Activated CD4-positive, alpha-beta T cell treated with anti-CD3 and anti-CD28 coated beads, Interleukin-2, amount 10 ng/mL, durations not matched to agents 24 days and 14 days (primary cell): ENCODE measurements at regions of chr4 and their contacts with region 1.

Region 1: DNA sequence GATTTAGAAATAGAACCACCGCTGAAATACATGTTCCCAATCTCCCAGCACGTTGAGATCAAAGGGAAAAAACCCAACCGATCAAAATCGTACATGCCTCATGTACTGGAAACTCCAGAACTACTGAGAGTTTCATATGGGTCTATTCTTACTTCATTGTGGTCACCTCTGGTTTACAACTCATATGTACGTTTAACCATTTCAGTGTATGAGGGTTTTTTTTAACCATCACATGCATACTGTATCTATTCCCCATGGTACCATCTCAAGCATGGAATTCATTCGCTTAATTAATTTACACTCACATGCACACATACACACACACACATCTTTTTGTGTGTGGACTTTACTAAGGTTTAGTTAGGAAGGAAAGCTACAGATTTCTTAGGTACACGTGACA is 46.0 kb upstream of the CLNK start:
- DNase-seq: no peak
- H3K4me3 Mint-ChIP-seq: peak overlapping the region; percentile 40
- H3K27ac Mint-ChIP-seq: peak overlapping the region; percentile 97
- H3K4me1 Mint-ChIP-seq: peaks cover 61% of the 10 kb centered on the region
- H3K27me3 Mint-ChIP-seq: no peaks in the 10 kb centered on the region

Region 2: DNA sequence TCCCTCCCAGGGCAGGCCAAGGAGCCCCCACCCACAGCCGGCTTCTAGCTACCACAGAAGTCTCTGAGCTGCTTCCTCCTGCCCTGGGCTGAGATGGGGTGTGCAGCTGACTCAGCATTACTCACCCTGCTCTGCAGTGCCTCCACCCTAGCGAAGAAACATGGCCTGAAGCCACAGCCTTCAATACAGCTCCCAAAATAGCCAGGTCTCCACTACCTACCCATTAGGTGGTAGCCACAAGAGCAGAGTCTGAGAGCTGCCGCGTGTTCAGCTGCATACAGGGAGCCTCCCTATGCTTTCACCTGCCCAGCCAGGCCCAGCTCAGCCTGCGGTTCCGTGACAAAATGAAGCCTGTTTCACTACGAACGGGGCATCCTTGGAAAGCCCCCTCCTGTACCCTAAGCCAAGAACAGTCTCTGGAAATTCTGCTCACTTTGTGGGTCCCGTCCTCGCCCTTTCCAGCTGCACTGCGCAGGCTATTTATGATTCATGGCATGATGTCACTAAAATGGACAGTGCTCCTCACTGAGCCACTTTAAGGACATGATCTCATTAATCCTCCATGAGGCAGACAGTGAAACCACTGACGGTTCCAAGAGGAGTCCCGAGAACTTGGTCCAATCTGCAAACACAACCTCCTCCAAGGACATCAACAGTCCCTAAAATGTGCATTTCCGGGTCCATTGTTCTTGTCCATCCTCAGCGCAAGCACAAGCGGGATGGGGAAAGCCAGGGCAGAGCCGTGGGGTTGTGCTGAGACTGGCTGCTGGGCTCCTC is 634.2 kb before region 1 on chr4:
- intact Hi-C with region 1: loop called (anchors 5 kb)
- DNase-seq: peak; percentile 92
- H3K4me3 Mint-ChIP-seq: peak overlapping the region; percentile 66
- H3K27ac Mint-ChIP-seq: peak overlapping the region; percentile 94
- H3K4me1 Mint-ChIP-seq: peaks cover 89% of the 10 kb centered on the region
- H3K27me3 Mint-ChIP-seq: no peaks in the 10 kb centered on the region

Region 3: DNA sequence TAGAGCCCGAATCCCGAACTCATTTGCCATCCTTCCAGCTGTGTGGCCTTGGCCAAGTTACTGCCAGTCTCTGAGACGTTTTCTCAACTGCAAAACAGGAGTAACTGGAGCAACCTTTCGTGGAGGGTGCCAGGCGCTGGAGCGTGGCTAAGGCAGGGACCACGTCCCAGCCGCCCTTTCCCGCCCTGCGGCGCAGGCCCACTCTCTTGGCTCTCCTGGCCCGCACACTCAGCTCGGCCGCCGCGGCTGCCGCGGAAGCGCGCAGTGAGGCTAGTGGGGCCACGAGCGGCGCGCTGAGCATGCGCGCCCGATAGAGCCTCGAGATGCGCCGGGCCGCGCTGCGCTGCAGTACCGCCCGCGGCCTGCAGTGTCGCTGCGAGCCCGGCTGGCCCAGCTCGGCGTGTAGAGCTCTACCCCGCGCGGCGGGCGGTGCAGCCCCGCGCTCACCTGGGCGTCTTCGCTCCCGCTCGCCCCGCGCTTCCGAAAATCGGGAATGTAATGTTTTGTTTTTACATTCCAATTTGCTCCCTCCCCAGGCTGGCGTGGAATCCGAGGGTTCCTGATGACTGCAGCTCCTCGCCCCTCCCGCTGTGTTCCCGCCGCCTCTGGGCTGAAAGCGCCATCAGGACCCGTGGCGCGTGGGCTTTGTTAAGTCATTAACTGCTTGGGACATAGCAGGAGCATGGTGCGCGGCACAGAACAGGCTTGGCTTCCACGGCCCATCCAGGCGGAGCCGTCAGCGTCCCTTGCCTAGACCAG is 269.3 kb before region 1 on chr4:
- intact Hi-C with region 1: loop called (anchors 5 kb)
- DNase-seq: peak; percentile 95
- H3K4me3 Mint-ChIP-seq: peak overlapping the region; percentile 84
- H3K27ac Mint-ChIP-seq: peak overlapping the region; percentile 22
- H3K4me1 Mint-ChIP-seq: peaks cover 30% of the 10 kb centered on the region
- H3K27me3 Mint-ChIP-seq: peaks cover 37% of the 10 kb centered on the region

Region 4: DNA sequence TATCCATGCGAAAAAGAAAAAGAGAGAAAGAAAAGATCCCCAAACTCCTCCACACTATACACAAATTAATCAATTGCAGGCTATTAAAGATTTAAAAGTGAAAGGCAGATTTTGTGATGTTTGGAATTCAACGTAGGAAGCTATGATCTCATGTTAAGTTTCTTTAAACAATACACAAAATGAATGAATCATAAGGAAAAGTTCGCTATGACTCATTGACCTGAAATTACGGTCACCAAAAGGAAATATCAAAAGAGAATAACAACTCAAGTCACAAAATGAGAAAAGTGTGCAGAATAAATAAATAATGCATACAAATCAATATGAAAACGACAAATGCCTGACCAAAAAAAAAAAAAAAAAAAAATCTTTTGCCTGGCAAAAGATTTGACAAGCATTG is 74.6 kb before region 1 on chr4:
- intact Hi-C with region 1: loop called (anchors 1 kb)
- DNase-seq: no peak
- H3K4me3 Mint-ChIP-seq: peak overlapping the region; percentile 55
- H3K27ac Mint-ChIP-seq: peak overlapping the region; percentile 80
- H3K4me1 Mint-ChIP-seq: peaks cover 32% of the 10 kb centered on the region
- H3K27me3 Mint-ChIP-seq: peaks cover 1% of the 10 kb centered on the region

Region 5: GRCh38 chr4:10740891-10741610 is 10.5 kb after region 1 on chr4:
- intact Hi-C with region 1: loop called (anchors 1 kb)
- DNase-seq: no peak
- H3K4me3 Mint-ChIP-seq: no peak overlapping the region
- H3K27ac Mint-ChIP-seq: no peak overlapping the region
- H3K4me1 Mint-ChIP-seq: peaks cover 26% of the 10 kb centered on the region
- H3K27me3 Mint-ChIP-seq: no peaks in the 10 kb centered on the region

Region 6: GRCh38 chr4:10841697-10842096 is 111.1 kb after region 1 on chr4:
- intact Hi-C with region 1: loop called (anchors 5 kb)
- DNase-seq: no peak
- H3K4me3 Mint-ChIP-seq: no peak overlapping the region
- H3K27ac Mint-ChIP-seq: no peak overlapping the region
- H3K4me1 Mint-ChIP-seq: peaks cover 7% of the 10 kb centered on the region
- H3K27me3 Mint-ChIP-seq: no peaks in the 10 kb centered on the region

Region 7: GRCh38 chr4:11428899-11429698 is 698.5 kb after region 1 on chr4:
- intact Hi-C with region 1: loop called (anchors 10 kb)
- DNase-seq: peak; percentile 75
- H3K4me3 Mint-ChIP-seq: peak overlapping the region; percentile 70
- H3K27ac Mint-ChIP-seq: no peak overlapping the region
- H3K4me1 Mint-ChIP-seq: peaks cover 8% of the 10 kb centered on the region
- H3K27me3 Mint-ChIP-seq: peaks cover 51% of the 10 kb centered on the region